AG04449 (cell line): ENCODE measurements at regions of chr10 and their contacts with region 1.

Region 1: DNA sequence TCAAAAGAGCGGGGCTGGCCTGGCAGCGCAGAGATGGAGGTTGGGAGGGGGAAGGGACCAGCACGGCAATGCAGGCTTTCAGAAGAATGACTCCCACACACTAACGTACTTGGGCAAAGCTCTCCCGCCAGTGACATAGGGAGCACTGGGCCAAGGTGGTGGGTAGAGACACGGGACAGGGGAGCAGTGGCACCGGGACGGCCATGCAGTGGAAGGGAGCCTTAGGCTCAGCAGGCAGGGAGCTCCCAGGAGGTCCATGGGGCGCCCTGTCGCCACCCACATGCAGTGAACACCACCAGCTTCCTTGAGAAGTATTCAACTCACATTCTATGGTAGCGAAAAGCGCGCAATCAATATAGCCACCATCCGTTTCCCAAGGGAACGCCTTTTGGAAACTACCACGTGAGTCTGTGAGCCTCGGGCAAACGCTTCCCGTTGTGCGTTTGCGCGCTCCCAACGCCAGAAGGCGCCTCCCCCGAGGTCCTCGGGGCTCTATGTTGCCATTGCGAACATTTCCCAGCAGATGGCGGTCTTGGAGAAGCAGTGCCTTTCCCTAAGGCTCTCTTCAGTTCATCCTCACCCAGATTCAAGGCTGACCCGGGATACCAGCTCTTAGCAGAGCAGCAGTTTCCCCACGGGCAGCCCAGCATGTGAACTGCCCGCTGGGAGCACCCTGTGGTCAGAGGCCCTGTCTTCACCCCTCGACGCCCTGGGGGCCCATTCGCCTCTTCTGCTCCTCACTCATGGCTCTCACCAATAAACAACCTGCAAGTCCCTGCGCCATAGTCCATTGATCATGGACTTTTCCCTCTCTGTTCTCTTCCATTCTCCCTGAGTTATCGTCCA is 16.4 kb upstream of the OPALIN start:
- DNase-seq: no peak
- H3K4me3 ChIP-seq: peak overlapping the region; percentile 58
- CTCF ChIP-seq: peak; percentile 97

Region 2: DNA sequence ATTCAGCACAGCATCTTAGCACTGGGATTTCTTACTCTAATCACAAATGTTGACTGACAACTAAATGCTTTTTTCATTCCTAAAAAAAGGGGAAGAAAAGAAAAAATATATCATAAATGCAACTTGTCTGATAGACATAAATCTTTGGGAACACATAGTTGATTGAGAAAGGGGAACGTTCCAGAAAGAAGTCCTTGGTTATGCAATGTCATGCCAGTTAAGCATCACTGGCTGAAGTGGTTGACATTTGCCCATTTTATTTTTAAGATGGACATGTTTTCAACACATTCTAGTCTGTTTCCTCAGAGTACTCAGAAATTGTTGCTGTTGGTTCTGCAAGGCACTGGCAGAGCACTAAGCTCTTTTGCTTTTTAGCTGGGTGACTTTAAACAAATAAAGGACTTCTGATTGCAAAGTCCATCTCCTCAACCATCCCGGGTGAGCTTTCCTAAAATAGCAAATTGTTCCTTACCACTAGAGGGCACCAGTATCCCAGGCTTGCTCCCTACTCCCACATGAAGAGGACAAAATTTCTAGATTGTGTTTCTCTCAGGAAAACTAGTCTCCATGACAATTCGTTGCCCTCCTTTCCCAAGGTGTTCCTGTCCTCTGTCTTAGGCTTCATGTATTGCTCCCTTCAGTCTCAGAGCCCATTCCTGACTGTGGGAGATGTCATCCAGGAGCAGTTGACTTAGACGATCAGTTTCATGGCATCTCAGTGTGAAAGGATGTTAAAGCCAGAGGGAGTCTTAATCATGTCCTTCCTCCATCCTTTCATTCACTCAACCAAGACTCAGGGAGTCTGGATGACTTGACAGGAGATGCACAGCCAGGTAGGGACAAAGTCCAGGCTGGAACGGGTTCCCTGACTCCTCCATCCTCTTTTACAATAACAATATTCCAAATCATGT is 40.3 kb before region 1 on chr10:
- CTCF ChIA-PET with region 1: interaction called, 10 read pairs
- POLR2A ChIA-PET with region 1: no interaction called
- DNase-seq: no peak
- H3K4me3 ChIP-seq: no peak overlapping the region
- CTCF ChIP-seq: peak; percentile 71

Region 3: DNA sequence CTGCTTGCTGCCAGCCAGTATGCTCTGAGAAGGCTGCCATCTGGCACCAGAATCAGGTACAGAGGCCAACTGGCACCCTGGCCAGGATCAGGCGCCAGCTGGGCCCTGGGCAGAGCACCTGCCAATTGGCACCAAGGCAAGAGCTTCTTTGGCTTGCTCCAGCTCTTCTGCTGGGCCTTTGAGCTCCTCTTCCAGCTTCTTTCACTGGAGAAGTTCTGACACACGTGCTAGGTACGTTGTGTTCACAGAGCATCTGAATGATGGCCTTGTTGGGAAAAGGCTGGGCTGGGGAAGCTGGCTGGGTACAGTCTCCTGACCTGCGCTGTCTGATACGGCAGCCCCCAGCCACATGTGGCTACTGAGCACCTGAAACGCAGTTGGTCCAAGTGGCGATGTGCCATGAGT is 15.3 kb after region 1 on chr10:
- CTCF ChIA-PET with region 1: interaction called, 44 read pairs
- POLR2A ChIA-PET with region 1: no interaction called
- DNase-seq: no peak
- H3K4me3 ChIP-seq: no peak overlapping the region
- CTCF ChIP-seq: no peak

Region 4: DNA sequence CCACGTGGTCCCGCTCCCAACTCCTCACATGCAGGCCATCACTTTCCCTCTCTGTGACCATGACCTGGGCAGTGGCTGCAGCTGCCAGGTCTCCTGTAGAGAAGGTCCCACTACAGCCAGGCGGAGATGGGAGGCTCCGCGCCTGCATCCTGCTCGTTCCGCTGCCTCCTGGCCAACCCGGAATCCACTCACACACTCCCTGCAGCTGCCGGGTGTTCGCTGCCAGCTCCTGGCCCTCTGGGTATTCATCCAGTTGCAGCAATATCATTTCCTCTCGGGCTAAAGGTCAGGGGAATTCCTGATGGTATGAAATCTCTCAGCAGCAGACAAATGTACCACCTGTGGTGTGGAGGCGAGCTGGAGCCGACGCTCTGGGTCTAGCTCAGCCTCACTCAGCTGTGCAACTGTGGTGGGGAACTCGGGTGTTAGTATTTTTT is 72.8 kb after region 1 on chr10:
- CTCF ChIA-PET with region 1: no interaction called
- POLR2A ChIA-PET with region 1: no interaction called
- DNase-seq: no peak
- H3K4me3 ChIP-seq: no peak overlapping the region
- CTCF ChIP-seq: no peak

Region 5: GRCh38 chr10:96548589-96548988 is 173.4 kb after region 1 on chr10:
- CTCF ChIA-PET with region 1: interaction called, 10 read pairs
- POLR2A ChIA-PET with region 1: no interaction called
- DNase-seq: no peak
- H3K4me3 ChIP-seq: no peak overlapping the region
- CTCF ChIP-seq: no peak

Region 6: GRCh38 chr10:96642973-96643372 is 267.8 kb after region 1 on chr10:
- CTCF ChIA-PET with region 1: interaction called, 14 read pairs
- POLR2A ChIA-PET with region 1: no interaction called
- DNase-seq: no peak
- H3K4me3 ChIP-seq: no peak overlapping the region
- CTCF ChIP-seq: peak; percentile 10